ENCODE measurements at regions of chr2 and their contacts with region 1.

Region 1: GRCh38 chr2:152627351-152627957 is 89.8 kb downstream of the PRPF40A start:
- DNase-seq: no peak
- ATAC-seq: no peak
- H3K4me3 Mint-ChIP-seq: no peak overlapping the region
- H3K27ac Mint-ChIP-seq: no peak overlapping the region
- H3K4me1 Mint-ChIP-seq: peaks cover 8% of the 10 kb centered on the region
- H3K27me3 Mint-ChIP-seq: peaks cover 5% of the 10 kb centered on the region

Region 2: DNA sequence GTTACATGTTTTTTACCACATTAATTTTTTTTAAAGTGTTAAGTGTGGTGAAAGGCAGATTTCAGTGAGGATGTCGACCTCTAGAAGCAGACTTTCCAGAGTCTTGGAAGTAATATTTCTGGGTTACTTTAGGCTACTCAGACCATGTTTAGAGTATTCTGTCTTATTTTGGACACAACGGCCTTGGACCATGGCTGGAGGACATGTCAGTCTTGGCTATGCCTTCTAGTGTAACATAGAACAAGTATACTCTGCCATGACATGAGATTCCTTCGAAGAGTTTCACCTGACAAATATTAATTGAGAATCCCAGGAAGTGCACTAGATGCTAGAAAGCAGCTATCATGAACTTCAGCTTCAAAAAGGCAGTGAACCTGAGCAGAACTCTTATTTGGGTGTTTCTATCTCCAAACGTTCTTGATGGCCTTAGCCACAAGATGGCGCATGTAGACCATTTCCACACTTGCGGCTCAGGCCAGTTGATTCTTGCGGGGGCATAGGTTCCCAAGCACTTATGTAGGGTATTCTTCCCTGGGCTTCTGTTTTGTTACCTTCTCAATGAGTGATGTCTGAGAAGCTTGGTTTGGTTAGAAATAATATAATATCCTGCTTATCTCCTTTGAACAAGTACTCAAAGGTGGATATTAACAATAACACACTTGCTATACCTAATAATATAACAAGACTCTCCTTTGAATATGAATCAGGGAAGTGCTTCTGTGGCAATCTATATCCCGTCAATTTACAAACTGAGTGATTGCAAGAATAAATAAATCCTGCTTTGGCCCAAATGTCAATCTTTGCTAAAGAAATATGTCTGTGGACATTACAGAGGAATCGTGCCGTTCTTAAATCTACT is 590.6 kb before region 1 on chr2:
- CTCF ChIA-PET with region 1: no interaction called
- POLR2A ChIA-PET with region 1: no interaction called
- intact Hi-C with region 1: loop called in 1 of 2 experiments (anchors 2 kb)
- DNase-seq: peak; percentile 77
- ATAC-seq: peak; percentile 42
- H3K4me3 Mint-ChIP-seq: no peak overlapping the region
- H3K27ac Mint-ChIP-seq: no peak overlapping the region
- H3K4me1 Mint-ChIP-seq: no peaks in the 10 kb centered on the region
- H3K27me3 Mint-ChIP-seq: peaks cover 2% of the 10 kb centered on the region

Region 3: GRCh38 chr2:152189622-152190495 is 437.6 kb before region 1 on chr2:
- CTCF ChIA-PET with region 1: no interaction called
- POLR2A ChIA-PET with region 1: no interaction called
- intact Hi-C with region 1: loop called in 1 of 2 experiments (anchors 1 kb)
- DNase-seq: peak; percentile 44
- ATAC-seq: peak; percentile 74
- H3K4me3 Mint-ChIP-seq: no peak overlapping the region
- H3K27ac Mint-ChIP-seq: no peak overlapping the region
- H3K4me1 Mint-ChIP-seq: peaks cover 7% of the 10 kb centered on the region
- H3K27me3 Mint-ChIP-seq: peaks cover 23% of the 10 kb centered on the region

Region 4: GRCh38 chr2:152566728-152567069 is 60.8 kb before region 1 on chr2:
- CTCF ChIA-PET with region 1: no interaction called
- POLR2A ChIA-PET with region 1: no interaction called
- intact Hi-C with region 1: no loop called
- DNase-seq: no peak
- ATAC-seq: no peak
- H3K4me3 Mint-ChIP-seq: no peak overlapping the region
- H3K27ac Mint-ChIP-seq: no peak overlapping the region
- H3K4me1 Mint-ChIP-seq: no peaks in the 10 kb centered on the region
- H3K27me3 Mint-ChIP-seq: peaks cover 11% of the 10 kb centered on the region

Region 5: GRCh38 chr2:152611458-152612231 is 15.8 kb before region 1 on chr2:
- CTCF ChIA-PET with region 1: no interaction called
- POLR2A ChIA-PET with region 1: no interaction called
- intact Hi-C with region 1: no loop called
- DNase-seq: no peak
- ATAC-seq: no peak
- H3K4me3 Mint-ChIP-seq: no peak overlapping the region
- H3K27ac Mint-ChIP-seq: no peak overlapping the region
- H3K4me1 Mint-ChIP-seq: peaks cover 8% of the 10 kb centered on the region
- H3K27me3 Mint-ChIP-seq: no peaks in the 10 kb centered on the region